T-cell (primary cell): ENCODE measurements at regions of chr16 and their contacts with region 1.

Region 1: DNA sequence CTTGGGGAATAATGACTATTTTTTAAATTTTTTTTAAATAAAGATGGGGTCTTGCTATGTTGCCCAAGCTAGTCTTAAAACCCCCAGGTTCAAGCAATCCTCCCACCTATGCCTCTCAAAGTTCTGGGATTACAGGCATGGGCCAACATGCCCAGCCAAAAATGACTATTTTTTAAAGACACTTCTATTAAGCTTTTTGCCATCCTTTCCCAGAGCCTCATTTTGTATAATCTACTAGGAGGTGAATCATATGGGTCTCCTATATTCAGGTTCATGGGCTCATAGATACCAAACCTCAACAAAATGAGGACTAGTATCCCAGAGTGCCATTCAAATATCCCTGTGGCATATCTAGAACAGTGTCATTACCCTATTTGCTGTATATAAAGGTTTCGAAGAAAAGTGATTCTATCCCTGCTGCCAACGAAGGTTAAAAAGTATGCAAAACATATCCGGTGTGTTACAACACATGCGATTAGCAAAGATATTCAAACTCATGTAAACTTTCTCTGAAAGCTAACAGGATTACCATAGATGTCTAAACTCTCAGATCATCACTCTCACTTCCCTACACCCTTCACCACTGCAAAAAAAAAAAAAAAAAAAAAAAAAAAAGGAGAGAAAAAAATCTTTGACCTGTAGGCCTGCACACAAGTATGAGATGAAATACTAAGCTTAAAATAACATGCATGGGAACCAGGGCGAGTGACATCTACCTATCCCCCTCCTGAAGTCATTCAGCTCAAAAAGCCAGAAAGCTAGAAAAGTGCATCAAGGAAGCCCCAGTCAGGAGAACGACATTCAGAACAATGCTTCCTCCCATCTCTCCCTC is 23.5 kb downstream of the XPO6 start:
- DNase-seq: peak in 1 of 35 experiments; percentile 26
- ATAC-seq: no peak
- H3K4me3 ChIP-seq: no peak overlapping the region
- H3K4me3 Mint-ChIP-seq: peak overlapping the region; percentile 46 to 67 (median 51)
- H3K27ac ChIP-seq: peak overlapping the region; percentile 75
- H3K27ac Mint-ChIP-seq: peak overlapping the region; percentile 89 to 93
- H3K4me1 ChIP-seq: peaks cover 64 to 67% of the 10 kb centered on the region in 2 experiments
- H3K4me1 Mint-ChIP-seq: peaks cover 93 to 95% (median 94%) of the 10 kb centered on the region in 3 donors
- H3K27me3 ChIP-seq: no peaks in the 10 kb centered on the region
- H3K27me3 Mint-ChIP-seq: no peaks in the 10 kb centered on the region

Region 2: DNA sequence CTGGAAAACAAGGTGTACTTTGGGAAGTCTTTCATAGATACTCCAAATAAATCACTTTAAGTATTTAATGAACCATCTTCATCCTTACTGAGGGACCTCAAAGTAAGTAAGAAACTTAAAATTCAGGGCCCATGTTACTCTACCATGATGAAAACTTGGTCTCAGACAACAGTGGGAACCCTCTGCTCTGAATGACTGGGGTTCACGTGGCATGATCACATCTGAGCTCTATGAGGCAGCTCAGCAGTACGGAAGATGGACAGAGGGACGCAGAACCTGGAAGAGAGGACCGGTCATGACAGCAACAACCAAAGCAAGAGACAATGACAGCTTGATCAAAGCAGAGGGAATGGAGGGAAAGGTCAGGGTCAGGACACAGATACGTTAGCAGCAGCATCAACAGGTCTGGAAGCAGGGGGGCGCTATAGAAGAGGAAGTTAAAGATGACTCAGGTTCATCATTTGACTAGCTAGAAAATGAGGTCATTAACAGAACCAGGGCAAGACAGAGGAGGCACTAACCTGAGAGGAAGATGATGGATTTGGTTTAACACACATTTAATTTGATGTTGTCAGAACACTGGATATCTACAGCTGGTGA is 13.9 kb after region 1 on chr16:
- CTCF ChIA-PET with region 1: interaction called, 4 to 10 read pairs
- POLR2A ChIA-PET with region 1: interaction called, 5 to 9 read pairs
- DNase-seq: peak in 6 of 35 experiments; percentile 2 to 42 (median 19)
- ATAC-seq: peak in 2 of 4 experiments; percentile 43 to 46
- H3K4me3 ChIP-seq: no peak overlapping the region
- H3K4me3 Mint-ChIP-seq: peak overlapping the region in 2 of 3 donors; percentile 0 to 50
- H3K27ac ChIP-seq: peak overlapping the region; percentile 40
- H3K27ac Mint-ChIP-seq: peak overlapping the region in 1 of 2 donors; percentile 78
- H3K4me1 ChIP-seq: peaks cover 4 to 52% of the 10 kb centered on the region in 2 experiments
- H3K4me1 Mint-ChIP-seq: peaks cover 7 to 35% (median 35%) of the 10 kb centered on the region in 3 donors
- H3K27me3 ChIP-seq: no peaks in the 10 kb centered on the region
- H3K27me3 Mint-ChIP-seq: no peaks in the 10 kb centered on the region

Region 3: DNA sequence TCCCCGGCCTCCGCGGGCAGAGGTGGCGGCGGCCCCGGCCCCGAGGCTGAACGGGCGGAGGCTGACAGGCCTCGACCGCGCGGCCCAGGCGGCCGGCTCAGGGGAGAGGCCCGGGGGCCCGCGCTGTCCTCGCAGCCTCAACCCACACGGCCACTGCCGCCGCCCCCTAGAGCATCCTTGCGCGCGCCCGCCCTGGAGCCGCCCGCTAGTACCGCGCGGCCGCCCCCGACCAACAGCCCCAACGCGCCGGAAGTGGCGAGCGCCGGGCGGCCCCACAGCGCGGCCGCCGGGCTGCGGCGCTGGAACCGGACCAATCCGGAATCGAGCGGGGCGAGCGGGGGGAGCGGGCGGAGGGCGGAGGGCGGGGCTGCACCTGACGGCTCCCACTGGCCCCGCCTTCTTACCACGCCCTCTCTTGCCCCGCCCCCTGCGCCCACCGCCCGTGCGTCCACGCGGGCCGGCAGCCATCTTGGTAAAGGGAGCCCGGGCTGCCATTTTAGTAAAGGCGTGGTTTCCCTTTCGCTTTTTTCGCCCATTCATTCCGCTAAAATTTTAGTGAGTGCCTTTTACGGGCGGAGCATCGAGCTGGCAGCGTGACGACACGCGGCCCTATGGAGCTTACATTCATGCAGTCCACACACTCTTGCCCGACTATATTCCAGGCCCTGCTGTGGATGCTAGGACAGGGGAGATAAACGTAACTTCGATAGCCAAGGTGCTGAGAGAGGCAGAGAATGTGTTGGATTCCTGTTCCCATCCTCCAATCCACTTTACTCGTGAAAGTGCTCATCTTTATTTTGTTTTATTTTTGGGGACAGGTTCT is 23.6 kb after region 1 on chr16 and contains the start of gene XPO6:
- CTCF ChIA-PET with region 1: interaction called in 1 of 2 experiments, 16 read pairs
- POLR2A ChIA-PET with region 1: interaction called, 8 to 10 read pairs
- DNase-seq: peak; percentile 91 to 99 (median 98)
- ATAC-seq: peak; percentile 84 to 90 (median 86)
- H3K4me3 ChIP-seq: peak within 1 kb of the TSS; percentile 89 to 93
- H3K4me3 Mint-ChIP-seq: peak within 1 kb of the TSS; percentile 78 to 90 (median 86)
- H3K27ac ChIP-seq: peak within 1 kb of the TSS; percentile 60
- H3K27ac Mint-ChIP-seq: peak within 1 kb of the TSS; percentile 89 to 91
- H3K4me1 ChIP-seq: peaks cover 24 to 39% of the 10 kb centered on the region in 2 experiments
- H3K4me1 Mint-ChIP-seq: peaks cover 29 to 40% (median 37%) of the 10 kb centered on the region in 3 donors
- H3K27me3 ChIP-seq: no peaks in the 10 kb centered on the region
- H3K27me3 Mint-ChIP-seq: no peaks in the 10 kb centered on the region
- total RNA-seq, gene XPO6: 355 to 403 (median 391) TPM

Region 4: DNA sequence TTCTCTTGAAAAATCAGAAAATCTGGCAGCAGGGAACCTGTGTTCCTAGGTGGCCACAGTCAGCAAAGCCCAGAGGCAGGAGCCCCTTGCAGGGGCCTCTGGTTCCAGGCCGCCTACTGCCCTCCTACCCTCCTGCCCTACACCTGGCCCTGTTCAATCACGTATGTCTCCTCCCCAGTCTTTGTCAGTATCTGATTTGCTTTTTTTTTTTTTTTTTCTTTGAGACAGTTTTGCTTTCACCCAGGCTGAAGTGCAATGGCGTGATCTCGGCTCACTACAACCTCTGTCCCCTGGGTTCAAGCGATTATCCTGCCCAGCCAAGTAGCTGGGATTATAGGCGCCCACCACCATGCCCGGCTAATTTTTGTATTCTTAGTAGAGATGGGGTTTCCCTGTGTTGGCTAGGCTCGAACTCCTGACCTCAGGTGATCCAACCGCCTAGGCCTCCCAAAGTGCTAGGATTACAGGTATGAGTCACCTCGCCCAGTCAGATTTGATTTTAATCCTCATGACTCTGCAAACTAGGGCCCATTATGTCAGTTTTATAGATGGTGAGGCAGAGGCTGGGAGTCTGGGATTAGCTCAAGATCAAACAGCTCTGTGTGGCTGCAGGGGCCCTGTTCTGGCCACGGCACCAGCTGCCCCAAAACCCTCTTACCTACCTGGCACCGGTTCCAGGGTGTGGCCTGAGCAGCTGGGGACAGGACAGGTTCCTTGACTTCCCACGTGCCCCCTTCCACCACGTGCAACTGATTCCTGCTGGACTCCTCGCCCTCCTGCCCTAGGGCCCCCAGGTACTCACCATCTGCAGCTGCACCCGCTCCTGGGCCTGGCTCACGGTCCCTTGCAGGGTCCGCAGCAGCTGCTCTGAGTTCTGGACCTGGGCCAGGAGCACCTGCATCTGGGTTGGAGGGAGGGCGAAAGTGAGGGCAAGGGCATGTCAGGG is 722.1 kb after region 1 on chr16:
- CTCF ChIA-PET with region 1: no interaction called
- POLR2A ChIA-PET with region 1: interaction called in 1 of 2 experiments, 11 read pairs
- DNase-seq: no peak
- ATAC-seq: no peak
- H3K4me3 ChIP-seq: no peak overlapping the region
- H3K4me3 Mint-ChIP-seq: no peak overlapping the region
- H3K27ac ChIP-seq: no peak overlapping the region
- H3K27ac Mint-ChIP-seq: no peak overlapping the region
- H3K4me1 ChIP-seq: no peaks in the 10 kb centered on the region
- H3K4me1 Mint-ChIP-seq: no peaks in the 10 kb centered on the region
- H3K27me3 ChIP-seq: no peaks in the 10 kb centered on the region
- H3K27me3 Mint-ChIP-seq: no peaks in the 10 kb centered on the region